Endothelial cell of umbilical vein (primary cell): ENCODE measurements at regions of chr18 and their contacts with region 1.

Region 1: DNA sequence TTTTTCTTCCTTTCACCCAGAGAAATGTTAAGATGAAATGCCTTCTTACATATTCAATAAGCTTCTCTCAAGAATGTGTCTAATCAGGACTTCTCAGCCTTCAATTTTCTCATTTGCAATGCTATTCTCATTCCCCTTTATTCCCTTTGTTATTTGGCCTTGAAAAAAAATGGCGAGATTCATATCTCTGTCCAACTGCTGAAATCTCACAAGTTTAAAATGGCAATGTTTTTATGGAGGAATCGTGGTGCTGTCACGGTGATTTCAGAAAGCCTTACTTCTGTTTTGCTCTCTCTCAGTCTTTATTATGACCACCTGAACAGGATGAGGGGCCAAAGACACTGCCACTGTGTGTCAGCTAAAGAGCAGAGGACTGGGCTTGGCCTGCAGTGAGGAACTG is 928.5 kb downstream of the DCC start:
- DNase-seq: no peak
- H3K4me3 ChIP-seq: no peak overlapping the region
- H3K27ac ChIP-seq: no peak overlapping the region
- H3K4me1 ChIP-seq: no peaks in the 10 kb centered on the region
- H3K27me3 ChIP-seq: no peaks in the 10 kb centered on the region
- CTCF ChIP-seq: no peak
- POLR2A ChIP-seq: no peak

Region 2: DNA sequence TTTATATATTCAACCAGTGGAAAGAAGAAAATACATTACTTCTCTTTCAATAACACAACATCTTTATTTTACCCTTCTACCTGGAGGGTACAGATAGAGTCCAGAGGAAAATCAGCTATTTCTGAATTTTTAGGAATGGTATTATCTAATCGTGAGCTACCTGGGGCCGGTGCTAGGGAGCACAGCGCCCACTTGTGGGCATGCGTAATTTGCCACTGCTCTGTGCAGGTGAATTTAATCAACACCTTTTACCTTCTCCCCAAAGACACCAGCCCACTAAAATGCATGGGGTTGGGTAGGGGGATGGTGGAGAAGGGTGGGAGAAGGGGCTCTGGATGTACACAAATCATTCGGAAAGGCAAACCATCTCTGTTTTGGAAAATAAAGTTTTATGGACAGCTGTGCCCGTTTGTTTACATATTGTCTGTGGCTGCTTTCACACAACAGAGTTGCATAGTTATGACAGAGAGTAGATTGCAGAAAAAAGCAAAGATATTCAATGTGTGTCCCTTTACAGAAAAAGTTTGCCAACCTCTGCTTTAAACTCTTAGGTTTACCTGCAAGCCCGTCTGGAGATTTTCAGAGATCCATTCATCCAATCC is 980.0 kb before region 1 on chr18:
- CTCF ChIA-PET with region 1: no interaction called
- POLR2A ChIA-PET with region 1: no interaction called
- dilution Hi-C with region 1: no loop called
- intact Hi-C with region 1: loop called (anchors 10 kb)
- DNase-seq: no peak
- H3K4me3 ChIP-seq: no peak overlapping the region
- H3K27ac ChIP-seq: no peak overlapping the region
- H3K4me1 ChIP-seq: no peaks in the 10 kb centered on the region
- H3K27me3 ChIP-seq: no peaks in the 10 kb centered on the region
- CTCF ChIP-seq: no peak
- POLR2A ChIP-seq: no peak